Panc1 (cell line): ENCODE measurements at regions of chr15 and their contacts with region 1.

Region 1: GRCh38 chr15:64490598-64491259 is 30.4 kb downstream of the ZNF609 start:
- DNase-seq: no peak
- ATAC-seq: no peak; the same call in 1 of the 2 replicates
- H3K4me3 ChIP-seq: no peak overlapping the region
- H3K27ac ChIP-seq: no peak overlapping the region
- H3K4me1 ChIP-seq: no peaks in the 10 kb centered on the region
- H3K27me3 ChIP-seq: no peaks in the 10 kb centered on the region
- CTCF ChIP-seq: no peak

Region 2: DNA sequence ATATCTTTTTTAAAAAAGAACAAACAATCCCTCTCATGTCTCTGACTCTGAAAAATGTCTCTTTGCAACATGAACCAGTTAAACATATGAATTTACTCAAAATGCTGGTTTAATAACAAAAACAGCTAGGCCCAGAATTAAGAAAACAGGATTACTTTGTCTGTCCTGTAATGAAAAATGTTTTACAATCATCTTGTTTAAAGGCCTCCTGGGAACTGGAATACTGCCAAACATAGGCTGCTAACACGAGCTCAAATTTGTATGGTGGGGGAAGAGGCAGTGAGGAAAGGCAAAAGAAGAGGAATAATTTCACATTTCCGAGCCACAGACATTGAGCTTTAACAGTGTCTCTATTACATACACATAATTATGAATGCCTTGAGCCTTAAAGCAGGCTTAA is 266.2 kb before region 1 on chr15:
- CTCF ChIA-PET with region 1: no interaction called
- POLR2A ChIA-PET with region 1: interaction called, 15 read pairs
- in situ Hi-C with region 1: no loop called
- intact Hi-C with region 1: no loop called
- DNase-seq: no peak
- ATAC-seq: no peak
- H3K4me3 ChIP-seq: no peak overlapping the region
- H3K27ac ChIP-seq: no peak overlapping the region
- H3K4me1 ChIP-seq: no peaks in the 10 kb centered on the region
- H3K27me3 ChIP-seq: no peaks in the 10 kb centered on the region
- CTCF ChIP-seq: no peak

Region 3: DNA sequence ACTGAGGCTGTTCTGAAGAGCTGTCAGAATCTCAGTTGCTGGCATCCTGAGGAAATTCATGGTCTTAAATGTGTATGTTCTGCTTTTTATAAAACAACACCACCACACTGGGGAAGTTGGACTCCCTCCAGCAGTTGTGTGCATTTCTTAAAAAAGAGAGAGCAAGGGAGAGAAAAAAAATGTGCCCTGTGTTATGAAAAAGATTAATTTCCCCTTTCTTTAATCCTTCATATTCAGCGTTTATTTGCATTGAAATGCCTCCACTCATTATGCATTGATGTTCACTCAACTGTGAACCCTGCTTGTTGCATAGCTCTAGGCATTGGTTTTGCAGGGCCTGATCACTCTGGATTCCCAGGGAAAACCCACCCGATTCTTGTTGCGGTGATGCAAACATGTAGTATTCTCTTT is 34.8 kb before region 1 on chr15:
- CTCF ChIA-PET with region 1: no interaction called
- POLR2A ChIA-PET with region 1: no interaction called
- in situ Hi-C with region 1: no loop called
- intact Hi-C with region 1: no loop called
- DNase-seq: no peak
- ATAC-seq: no peak
- H3K4me3 ChIP-seq: no peak overlapping the region
- H3K27ac ChIP-seq: no peak overlapping the region
- H3K4me1 ChIP-seq: peaks cover 11% of the 10 kb centered on the region
- H3K27me3 ChIP-seq: no peaks in the 10 kb centered on the region
- CTCF ChIP-seq: no peak

Region 4: DNA sequence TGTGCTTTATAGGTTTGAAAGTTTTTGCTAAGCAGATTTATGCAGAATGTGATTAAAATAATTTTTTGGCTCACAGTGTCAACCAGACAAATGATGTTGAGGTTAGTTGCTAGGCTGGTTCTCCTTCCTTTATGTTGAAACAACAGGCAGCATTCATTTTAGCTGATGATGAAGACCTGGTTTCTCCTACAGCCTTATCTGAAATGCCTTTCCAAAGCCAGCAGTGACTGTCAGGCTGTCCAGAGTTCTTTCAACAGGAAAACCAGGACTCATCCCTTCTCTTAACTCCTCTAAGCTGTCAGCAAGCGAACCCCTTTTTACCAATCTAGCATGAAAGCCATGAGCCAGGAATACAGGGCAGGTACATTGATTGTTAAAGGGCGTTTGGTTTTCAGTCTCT is 53.7 kb after region 1 on chr15:
- CTCF ChIA-PET with region 1: no interaction called
- POLR2A ChIA-PET with region 1: interaction called, 11 read pairs
- in situ Hi-C with region 1: no loop called
- intact Hi-C with region 1: no loop called
- DNase-seq: no peak
- ATAC-seq: no peak
- H3K4me3 ChIP-seq: no peak overlapping the region
- H3K27ac ChIP-seq: no peak overlapping the region
- H3K4me1 ChIP-seq: no peaks in the 10 kb centered on the region
- H3K27me3 ChIP-seq: no peaks in the 10 kb centered on the region
- CTCF ChIP-seq: no peak